AG04449 (cell line): ENCODE measurements at regions of chr6 and their contacts with region 1.

Region 1: DNA sequence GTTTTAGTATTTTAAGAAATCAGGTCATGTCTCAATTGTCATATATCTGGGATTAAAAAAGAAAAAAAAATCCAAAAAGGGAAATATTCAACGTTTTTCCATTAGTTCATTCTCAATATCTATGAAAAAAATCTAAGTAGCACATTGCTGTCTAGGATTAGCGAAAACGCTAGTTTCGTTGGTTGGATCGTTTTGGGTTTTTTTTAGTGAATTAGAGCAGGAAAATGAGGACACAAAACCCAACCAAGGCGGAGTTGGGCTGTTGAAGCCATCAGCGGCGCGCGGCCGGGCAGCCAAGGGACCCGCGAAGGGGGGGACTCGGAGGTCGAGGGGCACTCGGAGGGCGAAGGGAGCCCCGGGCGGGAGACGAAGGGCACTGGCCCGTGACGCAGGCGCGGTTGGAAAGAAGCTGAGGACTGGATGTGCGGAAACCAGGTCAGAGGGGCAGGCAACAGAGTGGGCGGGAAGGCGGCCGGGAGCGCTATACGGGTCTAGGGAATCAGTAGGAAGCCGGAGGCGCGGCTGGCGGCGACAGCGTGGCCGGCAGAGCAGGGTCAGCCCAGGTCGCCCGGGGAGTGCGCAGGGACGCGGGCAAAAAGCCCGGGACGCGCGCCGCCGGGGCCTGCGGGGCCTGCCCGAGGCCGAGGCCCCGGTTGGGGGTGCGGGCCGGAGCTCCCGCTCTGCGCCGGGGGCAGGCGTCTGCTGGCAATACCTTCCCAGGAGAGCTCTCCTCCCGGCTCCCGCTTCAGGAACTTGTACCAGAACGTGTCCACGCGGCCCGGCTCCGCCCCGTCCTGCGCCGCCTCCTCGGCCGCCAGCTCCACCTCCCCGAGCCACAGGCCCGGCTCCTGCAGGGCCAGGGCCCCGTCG is 599 bp downstream of the EPM2A start:
- DNase-seq: no peak
- H3K4me3 ChIP-seq: peak overlapping the region; percentile 73
- CTCF ChIP-seq: no peak

Region 2: GRCh38 chr6:145814501-145815308 is 80.0 kb after region 1 on chr6 and contains the start of gene FBXO30:
- CTCF ChIA-PET with region 1: interaction called, 3 read pairs
- POLR2A ChIA-PET with region 1: interaction called, 16 read pairs
- DNase-seq: no peak
- H3K4me3 ChIP-seq: peak within 1 kb of the TSS; percentile 79
- CTCF ChIP-seq: peak; percentile 7